IMR-90 (cell line): ENCODE measurements at regions of chr6 and their contacts with region 1.

Region 1: GRCh38 chr6:108904741-108905140 is 56.5 kb downstream of the ARMC2 start:
- DNase-seq: no peak
- ATAC-seq: no peak
- H3K4me3 ChIP-seq: no peak overlapping the region
- H3K27ac ChIP-seq: no peak overlapping the region
- H3K4me1 ChIP-seq: peaks cover 2% of the 10 kb centered on the region; the same call in 1 of the 2 replicates
- H3K27me3 ChIP-seq: no peaks in the 10 kb centered on the region
- CTCF ChIP-seq: no peak
- POLR2A ChIP-seq: no peak
- RAD21 ChIP-seq: no peak

Region 2: DNA sequence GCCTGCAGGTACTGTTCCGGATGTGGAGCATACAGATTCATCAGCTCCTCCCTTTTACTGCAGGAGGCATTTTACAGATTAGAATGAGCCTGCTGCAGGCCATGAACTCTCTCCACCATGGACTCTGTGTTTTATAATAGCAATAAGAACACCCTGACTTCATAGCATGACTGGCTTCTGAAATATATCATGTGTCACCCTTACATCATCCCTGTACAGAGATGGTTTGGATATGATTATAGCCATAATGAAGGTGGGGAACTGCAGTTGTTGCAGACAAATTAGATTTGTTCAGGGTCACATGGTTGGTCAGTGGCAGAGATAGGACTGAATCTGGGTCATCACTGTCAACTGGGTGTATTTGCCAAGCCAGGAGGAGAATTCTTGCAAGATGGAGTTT is 243.3 kb before region 1 on chr6:
- CTCF ChIA-PET with region 1: no interaction called
- POLR2A ChIA-PET with region 1: no interaction called
- dilution Hi-C with region 1: no loop called
- in situ Hi-C with region 1: no loop called
- intact Hi-C with region 1: no loop called
- DNase-seq: peak; percentile 82
- ATAC-seq: peak; percentile 76
- H3K4me3 ChIP-seq: no peak overlapping the region
- H3K27ac ChIP-seq: no peak overlapping the region
- H3K4me1 ChIP-seq: peaks cover 6% of the 10 kb centered on the region; the same call in 1 of the 2 replicates
- H3K27me3 ChIP-seq: no peaks in the 10 kb centered on the region
- CTCF ChIP-seq: no peak
- POLR2A ChIP-seq: no peak
- RAD21 ChIP-seq: no peak

Region 3: DNA sequence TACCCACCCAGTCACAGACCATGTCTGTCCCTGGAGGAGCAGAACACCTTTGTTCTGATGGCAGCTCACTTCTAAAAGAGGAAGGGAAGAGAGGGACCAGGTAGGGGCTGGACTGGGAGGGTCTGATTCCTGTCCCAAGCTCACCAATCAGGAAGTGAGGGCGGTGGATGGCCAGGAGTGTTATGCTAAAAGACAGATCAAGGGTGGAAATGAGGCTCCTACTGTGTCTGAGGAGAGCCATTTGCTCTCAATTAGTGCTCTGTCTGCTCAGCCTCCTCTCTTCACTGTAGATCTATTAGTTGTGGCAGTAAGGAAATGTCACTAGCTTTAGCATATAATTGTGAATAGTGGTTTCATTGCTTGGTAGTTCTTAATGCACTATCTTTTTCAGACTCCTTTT is 16.0 kb after region 1 on chr6:
- CTCF ChIA-PET with region 1: no interaction called
- POLR2A ChIA-PET with region 1: no interaction called
- dilution Hi-C with region 1: no loop called
- in situ Hi-C with region 1: no loop called
- intact Hi-C with region 1: no loop called
- DNase-seq: no peak
- ATAC-seq: no peak
- H3K4me3 ChIP-seq: no peak overlapping the region
- H3K27ac ChIP-seq: no peak overlapping the region
- H3K4me1 ChIP-seq: no peaks in the 10 kb centered on the region
- H3K27me3 ChIP-seq: peaks cover 1% of the 10 kb centered on the region; the same call in 1 of the 2 replicates
- CTCF ChIP-seq: no peak
- POLR2A ChIP-seq: no peak
- RAD21 ChIP-seq: no peak

Region 4: GRCh38 chr6:108988296-108988695 is 83.6 kb after region 1 on chr6:
- CTCF ChIA-PET with region 1: no interaction called
- POLR2A ChIA-PET with region 1: no interaction called
- dilution Hi-C with region 1: no loop called
- in situ Hi-C with region 1: no loop called
- intact Hi-C with region 1: loop called (anchors 5 kb)
- DNase-seq: no peak
- ATAC-seq: no peak
- H3K4me3 ChIP-seq: no peak overlapping the region
- H3K27ac ChIP-seq: no peak overlapping the region
- H3K4me1 ChIP-seq: no peaks in the 10 kb centered on the region
- H3K27me3 ChIP-seq: no peaks in the 10 kb centered on the region
- CTCF ChIP-seq: no peak
- POLR2A ChIP-seq: no peak
- RAD21 ChIP-seq: no peak

Region 5: GRCh38 chr6:109059571-109060021 is 154.9 kb after region 1 on chr6:
- CTCF ChIA-PET with region 1: no interaction called
- POLR2A ChIA-PET with region 1: no interaction called
- dilution Hi-C with region 1: no loop called
- in situ Hi-C with region 1: loop called (anchors 10 kb)
- intact Hi-C with region 1: no loop called
- DNase-seq: peak; percentile 24
- ATAC-seq: no peak
- H3K4me3 ChIP-seq: no peak overlapping the region
- H3K27ac ChIP-seq: no peak overlapping the region
- H3K4me1 ChIP-seq: peaks cover 2% of the 10 kb centered on the region; the same call in 1 of the 2 replicates
- H3K27me3 ChIP-seq: no peaks in the 10 kb centered on the region
- CTCF ChIP-seq: no peak
- POLR2A ChIP-seq: no peak
- RAD21 ChIP-seq: no peak